ENCODE measurements at regions of chr2 and their contacts with region 1.

Region 1: DNA sequence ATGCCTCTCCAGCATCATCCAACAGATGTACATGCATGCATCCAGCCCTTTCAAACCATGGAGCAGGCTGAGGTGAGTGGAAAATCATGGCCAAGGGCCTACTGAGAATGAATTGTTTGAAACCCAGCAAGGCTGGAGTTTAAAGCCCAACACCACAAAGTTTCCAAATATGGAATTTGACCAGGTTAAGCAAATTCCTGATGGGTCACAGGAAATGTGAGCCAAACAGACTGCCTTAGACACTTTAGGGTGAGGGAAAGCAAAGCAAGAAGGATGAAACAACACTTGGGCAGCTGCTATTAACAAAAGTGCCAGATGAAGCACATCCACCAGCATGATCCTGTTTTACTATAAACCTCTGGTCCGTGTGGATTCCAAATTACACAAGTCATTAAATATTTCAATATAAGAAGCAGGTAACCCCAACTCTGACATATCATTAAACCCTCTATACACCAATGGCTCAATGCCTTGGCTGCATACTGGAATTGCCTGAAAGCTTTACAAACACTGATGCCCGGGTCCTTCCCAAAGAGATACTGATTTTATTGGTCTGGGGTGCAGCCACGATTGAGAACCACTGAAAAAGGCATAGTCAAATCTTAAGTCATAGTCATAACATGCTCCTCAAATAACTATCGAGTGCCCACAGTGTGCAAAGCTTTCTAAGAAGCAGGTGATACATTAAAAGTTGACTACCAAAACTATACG is 9.1 kb downstream of the KLF7 start:
- DNase-seq: no peak
- H3K4me3 Mint-ChIP-seq: no peak overlapping the region
- H3K27ac Mint-ChIP-seq: no peak overlapping the region
- H3K4me1 Mint-ChIP-seq: peaks cover 78% of the 10 kb centered on the region
- H3K27me3 Mint-ChIP-seq: no peaks in the 10 kb centered on the region

Region 2: GRCh38 chr2:207143215-207144172 is 13.1 kb before region 1 on chr2:
- intact Hi-C with region 1: loop called (anchors 1 kb)
- DNase-seq: peak; percentile 61
- H3K4me3 Mint-ChIP-seq: peak overlapping the region; percentile 59
- H3K27ac Mint-ChIP-seq: peak overlapping the region; percentile 89
- H3K4me1 Mint-ChIP-seq: peaks cover 51% of the 10 kb centered on the region
- H3K27me3 Mint-ChIP-seq: no peaks in the 10 kb centered on the region

Region 3: DNA sequence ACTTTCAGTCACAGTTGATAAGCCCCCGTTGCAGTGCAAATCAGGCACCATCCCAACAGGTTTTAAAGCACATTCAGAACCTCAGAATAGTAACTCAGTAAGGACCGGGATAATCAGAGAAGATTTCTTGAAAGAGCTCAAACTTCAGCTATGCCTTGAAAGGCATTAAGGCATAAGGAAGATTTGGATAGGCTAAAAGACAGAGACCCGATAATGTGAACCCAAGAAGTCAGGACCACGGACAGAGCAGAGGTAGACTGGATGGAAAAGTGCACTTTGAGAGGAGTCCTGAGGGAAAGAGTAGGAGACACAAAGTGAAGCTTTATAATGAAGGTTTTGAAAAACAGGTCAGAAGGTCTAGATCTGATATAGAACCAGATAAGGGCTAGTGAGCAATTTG is 46.0 kb after region 1 on chr2:
- intact Hi-C with region 1: no loop called
- DNase-seq: no peak
- H3K4me3 Mint-ChIP-seq: no peak overlapping the region
- H3K27ac Mint-ChIP-seq: no peak overlapping the region
- H3K4me1 Mint-ChIP-seq: no peaks in the 10 kb centered on the region
- H3K27me3 Mint-ChIP-seq: no peaks in the 10 kb centered on the region